ENCODE measurements at regions of chr10 and their contacts with region 1.

Region 1: DNA sequence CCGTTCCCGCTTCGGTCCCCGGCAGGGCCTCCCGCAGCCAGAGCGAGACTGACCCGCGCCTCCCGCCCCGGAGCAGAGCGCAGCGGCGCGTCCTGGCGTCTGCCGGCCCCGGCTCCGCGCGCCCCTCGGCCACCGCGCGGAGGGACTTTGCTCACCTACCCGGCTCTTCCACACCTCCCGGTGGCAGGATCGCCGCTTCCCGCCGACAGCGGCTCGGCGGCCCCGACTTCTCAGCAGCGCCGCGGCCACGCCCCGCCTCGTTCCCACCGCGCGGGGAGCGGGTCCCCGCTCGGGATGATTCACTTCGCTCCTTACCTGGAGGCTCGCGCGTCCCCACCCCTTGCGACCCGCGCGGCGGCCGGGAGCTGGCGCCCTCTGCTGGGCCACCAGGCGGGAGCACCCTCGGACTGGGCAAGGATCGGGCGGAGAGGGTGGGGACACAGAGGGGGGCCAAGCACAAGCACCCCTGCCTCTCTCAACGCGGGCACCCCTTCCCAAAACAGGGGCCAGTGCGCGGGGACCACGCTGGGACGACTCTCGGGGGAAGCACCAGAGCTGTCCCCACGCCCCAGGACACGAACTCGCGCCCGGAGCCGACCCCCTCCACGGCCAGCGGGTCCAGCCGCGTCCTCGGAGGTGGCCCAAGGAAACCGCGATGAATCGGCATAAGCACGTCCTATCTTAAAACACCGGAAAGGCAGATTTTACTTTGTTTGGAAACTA is 101.0 kb upstream of the SVIL start:
- DNase-seq: peak; percentile 85 to 86
- ATAC-seq: peak; percentile 87 to 95 (median 92)
- H3K4me3 ChIP-seq: peak overlapping the region; percentile 73 to 97 (median 90)
- H3K27ac ChIP-seq: peak overlapping the region; percentile 93 to 99 (median 97)
- H3K4me1 ChIP-seq: peaks cover 5 to 34% (median 20%) of the 10 kb centered on the region in 9 donors
- H3K27me3 ChIP-seq: no peaks in the 10 kb centered on the region
- CTCF ChIP-seq: peak; percentile 90 to 98 (median 95)

Region 2: GRCh38 chr10:29522061-29522855 is 213.5 kb before region 1 on chr10:
- intact Hi-C with region 1: loop called in 1 of 10 experiments (anchors 10 kb)
- DNase-seq: no peak
- ATAC-seq: peak in 3 of 8 donors; percentile 18 to 52 (median 23)
- H3K4me3 ChIP-seq: peak overlapping the region in 1 of 10 donors; percentile 27
- H3K27ac ChIP-seq: peak overlapping the region in 6 of 10 donors; percentile 14 to 53 (median 32)
- H3K4me1 ChIP-seq: peaks cover 0 to 26% (median 7%) of the 10 kb centered on the region in 9 donors
- H3K27me3 ChIP-seq: no peaks in the 10 kb centered on the region
- CTCF ChIP-seq: no peak

Region 3: GRCh38 chr10:29590915-29591650 is 144.7 kb before region 1 on chr10:
- intact Hi-C with region 1: loop called in 4 of 10 experiments (anchors 5 to 10 kb)
- DNase-seq: no peak
- ATAC-seq: no peak
- H3K4me3 ChIP-seq: no peak overlapping the region
- H3K27ac ChIP-seq: peak overlapping the region in 7 of 10 donors; percentile 23 to 84 (median 66)
- H3K4me1 ChIP-seq: peaks cover 14 to 94% (median 56%) of the 10 kb centered on the region in 9 donors
- H3K27me3 ChIP-seq: no peaks in the 10 kb centered on the region
- CTCF ChIP-seq: peak in 3 of 9 donors; percentile 2 to 18 (median 3)

Region 4: GRCh38 chr10:29635711-29636144 is 100.0 kb before region 1 on chr10:
- intact Hi-C with region 1: loop called in 7 of 10 experiments (anchors 5 to 10 kb)
- DNase-seq: no peak
- ATAC-seq: peak in 5 of 8 donors; percentile 3 to 61 (median 43)
- H3K4me3 ChIP-seq: peak overlapping the region in 5 of 10 donors; percentile 6 to 59 (median 55)
- H3K27ac ChIP-seq: peak overlapping the region; percentile 62 to 93 (median 86)
- H3K4me1 ChIP-seq: peaks cover 2 to 42% (median 27%) of the 10 kb centered on the region in 9 donors
- H3K27me3 ChIP-seq: no peaks in the 10 kb centered on the region
- CTCF ChIP-seq: no peak

Region 5: GRCh38 chr10:29841724-29842649 is 106.2 kb after region 1 on chr10:
- intact Hi-C with region 1: loop called in 3 of 10 experiments (anchors 5 kb)
- DNase-seq: peak; percentile 57 to 82
- ATAC-seq: peak; percentile 73 to 93 (median 88)
- H3K4me3 ChIP-seq: peak overlapping the region in 4 of 10 donors; percentile 13 to 27 (median 26)
- H3K27ac ChIP-seq: peak overlapping the region in 9 of 10 donors; percentile 59 to 83 (median 71)
- H3K4me1 ChIP-seq: peaks cover 3 to 36% (median 6%) of the 10 kb centered on the region in 9 donors
- H3K27me3 ChIP-seq: no peaks in the 10 kb centered on the region
- CTCF ChIP-seq: no peak

Region 6: DNA sequence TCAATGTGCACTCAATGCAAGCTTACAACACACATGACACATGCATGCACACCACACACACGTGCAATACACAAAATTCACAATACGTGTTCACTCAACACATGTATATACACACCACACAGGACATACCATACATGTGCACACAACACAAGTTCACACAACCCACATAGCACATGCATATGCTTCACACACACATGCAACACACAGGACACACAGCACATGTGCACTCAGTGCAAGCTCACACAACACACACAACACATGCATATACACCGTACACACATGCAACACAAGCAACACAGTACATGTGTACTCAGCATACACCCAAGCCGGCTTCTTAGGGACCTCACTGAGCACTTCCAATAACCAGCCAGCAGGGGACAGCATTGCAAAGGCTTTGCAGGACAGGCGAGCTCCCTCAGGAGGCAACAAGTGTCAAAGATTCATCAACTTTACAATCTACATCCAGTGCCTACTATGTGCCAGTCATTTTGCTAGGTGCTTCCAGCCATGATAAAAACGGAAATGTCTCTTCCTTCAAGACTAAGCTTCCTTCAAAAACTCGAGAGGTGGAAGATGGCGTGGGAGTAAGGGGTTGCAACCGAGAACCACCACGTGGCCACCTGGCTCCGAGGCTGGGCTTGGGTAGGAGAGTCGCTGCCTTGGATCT is 262.5 kb after region 1 on chr10:
- intact Hi-C with region 1: loop called in 1 of 10 experiments (anchors 10 kb)
- DNase-seq: peak; percentile 62 to 80
- ATAC-seq: peak in 7 of 8 donors; percentile 45 to 70 (median 63)
- H3K4me3 ChIP-seq: no peak overlapping the region
- H3K27ac ChIP-seq: no peak overlapping the region
- H3K4me1 ChIP-seq: peaks cover 11 to 36% (median 29%) of the 10 kb centered on the region in 9 donors
- H3K27me3 ChIP-seq: peaks cover 0 to 11% (median 0%) of the 10 kb centered on the region in 7 donors
- CTCF ChIP-seq: peak; percentile 96 to 100 (median 99)

Measured in heart right ventricle (tissue), 16 donors.